ENCODE measurements at regions of chr2 and their contacts with region 1.

Region 1: DNA sequence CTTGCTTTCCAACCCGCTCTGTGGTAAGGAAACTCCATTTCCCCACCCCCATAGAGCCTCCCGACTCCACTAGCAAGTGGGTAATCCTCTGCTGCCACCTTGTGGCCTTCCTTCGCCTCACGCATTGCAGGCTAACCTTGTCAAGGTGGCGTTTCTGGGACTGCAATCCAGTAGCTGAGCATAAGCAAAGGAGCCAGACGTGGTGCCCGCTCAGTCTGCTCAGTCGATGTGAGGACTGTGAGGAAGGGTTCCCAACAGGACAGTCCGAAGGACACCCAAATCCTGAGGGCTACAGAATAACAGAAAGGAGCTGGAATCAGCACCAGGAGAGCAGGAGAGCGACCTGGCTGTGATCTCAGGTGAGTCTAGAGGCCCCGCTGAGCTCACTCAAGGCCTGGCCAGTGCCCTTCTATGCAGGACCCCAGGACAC is 144.2 kb downstream of the SUCLG1 start:
- DNase-seq: peak; percentile 74
- ATAC-seq: peak; percentile 99
- H3K4me3 ChIP-seq: no peak overlapping the region
- H3K27ac ChIP-seq: no peak overlapping the region
- H3K4me1 ChIP-seq: no peaks in the 10 kb centered on the region
- H3K27me3 ChIP-seq: peaks cover 5% of the 10 kb centered on the region; the same call in 1 of the 2 replicates
- CTCF ChIP-seq: peak; percentile 87
- POLR2A ChIP-seq: no peak
- RAD21 ChIP-seq: peak; percentile 87

Region 2: GRCh38 chr2:84424152-84424551 is 109.2 kb after region 1 on chr2:
- CTCF ChIA-PET with region 1: no interaction called
- POLR2A ChIA-PET with region 1: no interaction called
- dilution Hi-C with region 1: no loop called
- in situ Hi-C with region 1: no loop called
- intact Hi-C with region 1: loop called (anchors 1 kb)
- DNase-seq: peak; percentile 33
- ATAC-seq: peak; percentile 64; the same call in 1 of the 2 replicates
- H3K4me3 ChIP-seq: no peak overlapping the region
- H3K27ac ChIP-seq: no peak overlapping the region
- H3K4me1 ChIP-seq: peaks cover 4% of the 10 kb centered on the region
- H3K27me3 ChIP-seq: no peaks in the 10 kb centered on the region
- CTCF ChIP-seq: peak; percentile 66
- POLR2A ChIP-seq: no peak
- RAD21 ChIP-seq: peak; percentile 72

Region 3: DNA sequence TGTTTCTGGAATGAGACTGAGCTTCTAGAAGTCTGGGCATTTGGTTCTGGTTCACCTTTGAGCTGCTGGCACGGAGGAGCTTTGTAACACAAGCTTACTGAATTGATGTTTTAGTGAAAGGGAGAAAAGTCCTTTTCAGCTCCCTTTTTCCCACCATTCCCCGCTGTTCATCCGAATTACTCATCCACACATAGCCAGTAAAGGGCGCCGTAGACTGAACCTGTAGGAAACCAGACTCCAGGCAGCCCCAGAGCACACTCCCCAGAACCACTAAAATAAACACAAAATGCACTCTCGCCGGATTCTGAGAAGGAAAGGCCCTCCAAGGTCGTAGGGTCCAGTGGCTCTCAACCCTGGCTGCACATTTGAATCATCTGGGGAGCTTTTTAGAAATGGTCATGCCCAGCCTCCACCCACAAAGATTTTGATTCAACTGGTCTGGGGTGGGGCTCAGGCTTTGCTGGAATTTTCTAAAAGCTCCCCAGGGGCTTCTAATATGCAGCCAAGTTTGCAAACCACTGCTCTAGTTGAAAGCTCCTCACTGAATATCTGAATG is 847.9 kb after region 1 on chr2:
- CTCF ChIA-PET with region 1: no interaction called
- POLR2A ChIA-PET with region 1: no interaction called
- dilution Hi-C with region 1: no loop called
- in situ Hi-C with region 1: no loop called
- intact Hi-C with region 1: no loop called
- DNase-seq: peak; percentile 83
- ATAC-seq: peak; percentile 89
- H3K4me3 ChIP-seq: no peak overlapping the region
- H3K27ac ChIP-seq: peak overlapping the region; percentile 22; the same call in 1 of the 2 replicates
- H3K4me1 ChIP-seq: peaks cover 25% of the 10 kb centered on the region
- H3K27me3 ChIP-seq: no peaks in the 10 kb centered on the region
- CTCF ChIP-seq: 0 out of 2 replicates have a peak, but pooled peaks have one; percentile 5
- POLR2A ChIP-seq: no peak
- RAD21 ChIP-seq: 0 out of 2 replicates have a peak, but pooled peaks have one; percentile 8

Measured in IMR-90 (cell line).